ENCODE measurements at regions of chr2 and their contacts with region 1.

Region 1: GRCh38 chr2:73071360-73072133 is at the start of gene SFXN5:
- DNase-seq: peak; percentile 97
- ATAC-seq: peak; percentile 96
- H3K4me3 Mint-ChIP-seq: peak within 1 kb of the TSS; percentile 82
- H3K27ac Mint-ChIP-seq: peak within 1 kb of the TSS; percentile 90
- H3K4me1 Mint-ChIP-seq: peaks cover 17% of the 10 kb centered on the region
- H3K27me3 Mint-ChIP-seq: no peaks in the 10 kb centered on the region
- total RNA-seq, gene SFXN5: 4.5 to 6.2 TPM

Region 2: GRCh38 chr2:71226965-71227560 is 1844.5 kb before region 1 on chr2 and contains the start of gene PAIP2B:
- CTCF ChIA-PET with region 1: no interaction called
- POLR2A ChIA-PET with region 1: no interaction called
- intact Hi-C with region 1: loop called in 1 of 2 experiments (anchors 2 kb)
- DNase-seq: peak; percentile 99
- ATAC-seq: peak; percentile 97
- H3K4me3 Mint-ChIP-seq: peak within 1 kb of the TSS; percentile 94
- H3K27ac Mint-ChIP-seq: peak within 1 kb of the TSS; percentile 85
- H3K4me1 Mint-ChIP-seq: peaks cover 15% of the 10 kb centered on the region
- H3K27me3 Mint-ChIP-seq: peaks cover 5% of the 10 kb centered on the region
- total RNA-seq, gene PAIP2B: 2.3 to 3.0 TPM

Region 3: GRCh38 chr2:72825241-72826155 is 246.0 kb before region 1 on chr2 and contains the start of gene EXOC6B:
- CTCF ChIA-PET with region 1: no interaction called
- POLR2A ChIA-PET with region 1: no interaction called
- intact Hi-C with region 1: loop called in 1 of 2 experiments (anchors 1 kb)
- DNase-seq: peak; percentile 91
- ATAC-seq: peak; percentile 80
- H3K4me3 Mint-ChIP-seq: peak within 1 kb of the TSS; percentile 93
- H3K27ac Mint-ChIP-seq: peak within 1 kb of the TSS; percentile 75
- H3K4me1 Mint-ChIP-seq: peaks cover 40% of the 10 kb centered on the region
- H3K27me3 Mint-ChIP-seq: peaks cover 2% of the 10 kb centered on the region
- total RNA-seq, gene EXOC6B: 7.0 to 9.0 TPM

Region 4: DNA sequence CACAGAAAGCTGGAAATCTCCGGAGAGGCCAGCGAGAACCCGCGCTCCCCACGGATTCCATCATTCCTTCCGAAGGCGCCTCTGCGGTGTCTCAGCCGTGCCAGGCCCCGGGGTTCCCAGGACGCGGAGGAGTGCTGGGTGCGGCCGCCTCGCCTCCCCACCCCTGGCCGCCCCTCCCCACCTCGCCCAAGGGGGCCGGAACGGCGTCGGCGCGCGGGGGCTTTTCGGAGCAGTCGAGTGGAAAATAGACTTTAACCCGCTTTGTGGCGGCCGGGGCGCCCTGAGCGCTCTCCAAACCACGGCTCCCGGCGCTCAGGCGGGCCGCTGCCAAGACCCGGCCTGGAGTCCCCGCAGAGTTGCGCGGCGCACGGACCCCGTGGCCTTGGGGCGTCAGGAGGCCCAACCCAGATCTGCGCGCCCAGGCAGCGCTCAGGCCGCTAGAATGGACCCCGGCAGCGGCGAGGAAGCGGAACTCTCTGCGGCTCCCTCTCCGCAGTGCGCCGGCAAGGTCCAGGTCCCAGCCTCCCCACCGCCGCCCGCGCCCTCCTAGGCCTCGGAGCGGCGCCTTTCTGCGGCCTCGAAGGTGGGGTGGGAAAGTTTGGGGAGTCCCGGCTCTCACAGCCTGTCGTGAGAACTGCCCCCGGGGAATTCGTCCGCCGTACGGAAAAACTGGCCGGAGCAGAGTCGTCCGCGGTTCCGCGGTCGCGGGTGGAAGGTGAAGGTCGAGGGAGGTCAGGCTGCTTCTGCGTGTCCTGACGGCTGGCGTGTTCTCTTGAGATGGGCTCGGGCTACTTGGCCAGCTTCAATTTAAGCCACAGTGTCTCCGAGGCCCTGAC is 155.4 kb before region 1 on chr2:
- CTCF ChIA-PET with region 1: no interaction called
- POLR2A ChIA-PET with region 1: no interaction called
- intact Hi-C with region 1: loop called in 1 of 2 experiments (anchors 1 kb)
- DNase-seq: peak; percentile 74
- ATAC-seq: peak; percentile 60
- H3K4me3 Mint-ChIP-seq: peak overlapping the region; percentile 64
- H3K27ac Mint-ChIP-seq: no peak overlapping the region
- H3K4me1 Mint-ChIP-seq: peaks cover 30% of the 10 kb centered on the region
- H3K27me3 Mint-ChIP-seq: peaks cover 71% of the 10 kb centered on the region

Region 5: DNA sequence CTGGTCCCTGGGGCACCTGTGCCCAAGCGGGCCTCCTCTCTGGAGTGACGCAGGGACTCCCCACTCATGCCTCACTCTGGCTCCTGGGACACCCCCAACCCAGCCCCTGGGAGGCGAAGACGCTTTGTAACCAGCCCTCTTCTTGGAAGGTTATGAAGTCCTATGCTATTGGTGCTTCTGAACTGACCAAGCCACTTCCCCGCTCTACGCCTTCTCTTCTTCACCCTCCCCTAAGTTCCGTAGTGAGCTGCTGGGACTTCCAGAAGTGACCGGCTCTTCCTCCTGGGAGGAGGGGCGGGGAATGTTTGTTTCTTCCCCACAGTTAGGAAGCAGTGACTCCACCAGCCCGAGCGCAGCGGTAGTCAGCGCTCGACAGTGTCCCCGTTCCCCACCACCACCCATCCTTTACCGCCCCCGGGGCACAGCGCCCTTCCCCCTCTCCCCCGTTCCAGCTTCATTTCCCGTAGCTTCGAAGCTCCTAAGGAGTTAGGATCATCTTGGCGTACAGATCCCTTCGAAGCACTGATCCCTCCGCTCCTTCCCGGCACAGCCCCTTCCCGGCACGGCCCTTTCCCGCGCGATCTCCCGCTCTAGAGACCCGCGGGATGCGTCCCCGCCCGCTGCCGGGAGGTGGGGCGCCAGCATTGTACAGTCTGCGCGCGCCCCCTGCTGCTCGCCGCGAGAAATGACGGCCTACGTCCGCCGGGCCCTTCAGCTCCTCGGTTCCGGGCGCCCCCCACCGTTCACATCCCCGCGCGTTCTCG is 105.5 kb after region 1 on chr2:
- CTCF ChIA-PET with region 1: interaction called, 26 read pairs
- POLR2A ChIA-PET with region 1: no interaction called
- intact Hi-C with region 1: loop called (anchors 1 to 5 kb)
- DNase-seq: peak; percentile 95
- ATAC-seq: peak; percentile 72
- H3K4me3 Mint-ChIP-seq: peak overlapping the region; percentile 71
- H3K27ac Mint-ChIP-seq: peak overlapping the region; percentile 63
- H3K4me1 Mint-ChIP-seq: peaks cover 31% of the 10 kb centered on the region
- H3K27me3 Mint-ChIP-seq: peaks cover 42% of the 10 kb centered on the region

Region 6: DNA sequence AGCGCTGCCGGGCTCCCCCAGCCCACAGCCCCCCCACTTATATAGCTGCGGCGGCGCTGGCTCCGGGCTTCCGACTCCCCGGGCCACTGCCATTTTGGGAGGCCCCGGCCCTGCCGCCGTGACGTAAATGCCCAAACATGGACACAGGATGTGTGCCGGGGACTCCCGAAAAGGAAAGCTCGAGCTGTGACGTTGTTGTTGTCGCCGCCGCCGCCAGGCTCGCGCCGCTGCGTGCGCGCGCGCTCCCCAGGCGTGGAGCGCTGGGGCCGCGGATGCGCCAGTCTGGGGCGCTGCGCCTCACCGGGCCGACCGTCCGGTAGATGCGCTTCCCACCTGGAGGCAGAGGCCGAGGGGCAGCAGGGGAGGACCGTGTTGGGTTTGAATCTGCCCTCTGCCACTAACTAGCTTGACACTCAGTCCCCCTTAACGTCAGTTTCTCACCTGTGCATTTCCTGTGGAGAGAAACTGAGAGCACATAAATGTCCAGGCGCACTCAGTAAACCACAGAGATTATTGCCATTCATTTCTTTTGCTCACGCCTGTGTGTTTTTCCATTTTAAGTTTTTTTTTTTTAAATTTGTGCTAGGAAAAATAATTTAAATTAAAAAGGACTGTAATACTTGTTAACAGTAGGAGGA is 222.1 kb after region 1 on chr2 and contains the start of gene EGR4:
- CTCF ChIA-PET with region 1: no interaction called
- POLR2A ChIA-PET with region 1: no interaction called
- intact Hi-C with region 1: loop called in 1 of 2 experiments (anchors 2 kb)
- DNase-seq: peak; percentile 95
- ATAC-seq: peak; percentile 96
- H3K4me3 Mint-ChIP-seq: peak within 1 kb of the TSS; percentile 68
- H3K27ac Mint-ChIP-seq: no peak within 1 kb of the TSS
- H3K4me1 Mint-ChIP-seq: peaks cover 12% of the 10 kb centered on the region
- H3K27me3 Mint-ChIP-seq: peaks cover 65% of the 10 kb centered on the region
- total RNA-seq, gene EGR4: 0.18 to 0.41 TPM

Measured in activated CD4-positive, alpha-beta T cell treated with anti-CD3 and anti-CD28 coated beads for 36 hours (primary cell).